H1 (cell line): ENCODE measurements at regions of chr21 and their contacts with region 1.

Region 1: DNA sequence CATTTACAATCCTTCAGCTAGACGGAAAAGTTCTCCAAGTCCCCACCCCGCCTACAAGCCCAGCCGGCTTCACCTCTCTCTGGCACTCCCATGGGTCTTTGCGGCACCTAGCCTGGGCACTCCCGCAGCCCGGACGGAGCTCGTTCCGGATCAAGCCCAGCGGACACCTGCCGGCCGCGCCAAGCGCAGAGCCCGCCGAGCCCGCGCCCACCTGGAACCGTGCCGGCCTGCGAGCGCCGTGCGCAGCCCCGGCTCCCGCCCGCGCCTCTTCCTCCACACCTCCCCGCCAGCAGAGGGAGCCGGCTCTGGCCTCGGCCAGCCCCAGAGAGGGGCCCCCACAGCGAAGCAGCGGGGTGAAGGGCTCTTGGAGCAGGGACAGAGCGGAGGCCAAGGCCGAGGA is 50.0 kb upstream of the KRTAP19-8 start:
- DNase-seq: peak in 1 of 2 experiments; percentile 52
- H3K4me3 ChIP-seq: no peak overlapping the region
- H3K27ac ChIP-seq: no peak overlapping the region
- H3K4me1 ChIP-seq: no peaks in the 10 kb centered on the region
- H3K27me3 ChIP-seq: no peaks in the 10 kb centered on the region
- CTCF ChIP-seq: peak; percentile 13 to 42 (median 28); a peak in 3 of 4 replicates
- EP300 ChIP-seq: no peak
- POLR2A ChIP-seq: no peak
- RAD21 ChIP-seq: 0 out of 4 replicates have a peak, but pooled peaks of 1 of the 2 experiments have one; percentile 19

Region 2: DNA sequence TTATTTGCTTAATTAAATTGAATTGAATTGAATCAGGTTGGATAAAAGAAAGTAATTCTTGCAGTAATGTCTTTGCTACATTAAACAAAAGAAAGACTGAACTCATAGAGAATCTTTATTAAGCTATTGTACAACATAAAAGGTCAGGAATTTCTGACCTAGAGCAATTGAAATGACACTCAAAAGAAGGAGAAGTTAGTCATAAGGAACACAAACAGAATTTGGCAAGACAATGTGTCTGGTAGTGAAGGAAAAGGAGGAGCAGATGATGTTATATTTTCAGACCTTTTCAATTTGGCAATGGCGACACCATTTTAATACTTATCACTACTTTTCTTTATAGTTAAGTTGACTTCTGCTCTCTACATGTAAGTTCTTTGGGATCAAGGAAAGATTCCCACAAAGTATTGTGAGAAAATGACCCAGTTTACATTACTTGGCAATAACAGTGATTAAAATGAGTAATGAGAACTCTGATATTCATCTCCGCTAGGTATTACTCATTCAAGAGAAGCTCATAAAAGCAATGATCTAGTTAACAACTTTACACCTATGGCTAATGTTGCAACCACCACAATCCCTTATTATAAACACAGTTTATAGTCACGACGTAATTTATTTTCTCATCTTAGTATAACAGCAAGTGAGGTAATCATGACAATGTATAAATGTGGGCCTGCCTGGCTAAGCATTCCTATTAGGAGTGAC is 318.4 kb before region 1 on chr21:
- CTCF ChIA-PET with region 1: no interaction called
- POLR2A ChIA-PET with region 1: no interaction called
- DNase-seq: no peak
- H3K4me3 ChIP-seq: no peak overlapping the region
- H3K27ac ChIP-seq: no peak overlapping the region
- H3K4me1 ChIP-seq: no peaks in the 10 kb centered on the region
- H3K27me3 ChIP-seq: no peaks in the 10 kb centered on the region
- CTCF ChIP-seq: no peak
- EP300 ChIP-seq: no peak
- POLR2A ChIP-seq: no peak
- RAD21 ChIP-seq: no peak

Region 3: DNA sequence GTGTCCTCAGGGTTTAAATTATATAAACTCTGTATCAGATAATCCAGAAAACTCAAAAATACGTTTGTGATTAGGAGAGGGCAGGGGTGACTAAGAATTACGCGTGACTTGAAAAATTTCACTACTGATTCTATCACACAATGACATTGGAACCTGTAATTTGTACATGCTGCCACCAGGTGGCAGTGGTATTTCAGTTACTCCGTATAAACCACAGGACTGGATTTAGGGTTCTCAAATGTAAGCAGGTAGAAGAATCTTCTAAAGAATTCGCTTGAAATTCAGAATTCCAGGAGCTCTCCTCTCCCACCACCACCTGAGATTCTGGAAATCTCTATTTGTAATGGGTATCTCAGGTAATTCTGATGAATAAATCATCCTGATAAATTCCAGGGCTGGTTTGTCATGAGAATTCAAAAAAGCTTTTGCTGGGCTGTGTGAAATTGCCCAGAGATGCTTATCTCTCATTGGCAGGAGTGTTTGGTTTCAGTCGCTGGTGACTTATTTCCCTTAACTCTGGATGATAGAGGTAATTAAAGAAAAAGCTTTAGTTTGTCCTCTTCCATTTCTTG is 257.0 kb before region 1 on chr21:
- CTCF ChIA-PET with region 1: interaction called, 34 read pairs
- POLR2A ChIA-PET with region 1: no interaction called
- DNase-seq: peak; percentile 21 to 77
- H3K4me3 ChIP-seq: no peak overlapping the region
- H3K27ac ChIP-seq: no peak overlapping the region
- H3K4me1 ChIP-seq: no peaks in the 10 kb centered on the region
- H3K27me3 ChIP-seq: no peaks in the 10 kb centered on the region
- CTCF ChIP-seq: peak in 2 of 3 experiments; percentile 45 to 75; a peak in 2 of 4 replicates
- EP300 ChIP-seq: no peak
- POLR2A ChIP-seq: no peak
- RAD21 ChIP-seq: peak; percentile 70 to 77

Region 4: DNA sequence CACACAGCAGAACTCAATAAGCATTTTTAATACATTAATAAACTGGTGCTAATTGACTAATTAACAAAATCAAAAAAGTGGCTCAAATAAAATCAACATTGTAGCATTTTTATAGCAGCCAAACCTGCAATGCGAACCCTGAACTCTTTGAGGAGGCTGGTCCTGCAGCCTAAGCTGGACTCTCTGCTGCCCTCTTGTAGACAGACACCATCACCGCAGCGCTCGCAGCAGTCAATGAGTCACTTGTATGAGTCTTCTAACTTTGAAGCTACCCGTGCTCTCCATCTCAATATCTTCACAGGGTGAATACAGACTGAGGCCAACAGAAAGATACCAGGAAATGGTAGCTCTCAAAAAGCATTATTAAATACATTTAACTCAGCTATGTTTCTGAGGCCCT is 249.0 kb before region 1 on chr21:
- CTCF ChIA-PET with region 1: interaction called, 34 read pairs
- POLR2A ChIA-PET with region 1: no interaction called
- DNase-seq: peak; percentile 29 to 63
- H3K4me3 ChIP-seq: no peak overlapping the region
- H3K27ac ChIP-seq: no peak overlapping the region
- H3K4me1 ChIP-seq: no peaks in the 10 kb centered on the region
- H3K27me3 ChIP-seq: no peaks in the 10 kb centered on the region
- CTCF ChIP-seq: peak; percentile 73 to 79 (median 77)
- EP300 ChIP-seq: no peak
- POLR2A ChIP-seq: no peak
- RAD21 ChIP-seq: peak; percentile 66 to 72

Region 5: GRCh38 chr21:31098576-31099005 is 10.3 kb after region 1 on chr21:
- CTCF ChIA-PET with region 1: interaction called, 23 read pairs
- POLR2A ChIA-PET with region 1: interaction called, 3 read pairs
- DNase-seq: peak; percentile 36 to 91
- H3K4me3 ChIP-seq: no peak overlapping the region
- H3K27ac ChIP-seq: no peak overlapping the region
- H3K4me1 ChIP-seq: peaks cover 0 to 2% (median 0%) of the 10 kb centered on the region in 4 experiments; a peak in 2 of 7 replicates
- H3K27me3 ChIP-seq: no peaks in the 10 kb centered on the region; a peak in 1 of 7 replicates
- CTCF ChIP-seq: peak; percentile 86 to 95 (median 89)
- EP300 ChIP-seq: no peak
- POLR2A ChIP-seq: no peak
- RAD21 ChIP-seq: peak; percentile 94 to 96